ENCODE measurements at regions of chr1 and their contacts with region 1.

Region 1: GRCh38 chr1:34984793-34985608 is at the start of gene TMEM35B:
- DNase-seq: peak; percentile 82
- ATAC-seq: peak; percentile 91
- H3K4me3 ChIP-seq: peak within 1 kb of the TSS; percentile 51 to 83 (median 63)
- H3K4me3 Mint-ChIP-seq: peak within 1 kb of the TSS; percentile 95
- H3K27ac ChIP-seq: peak within 1 kb of the TSS; percentile 63 to 81
- H3K27ac Mint-ChIP-seq: peak within 1 kb of the TSS; percentile 94
- H3K4me1 ChIP-seq: peaks cover 29 to 41% of the 10 kb centered on the region in 2 donors
- H3K4me1 Mint-ChIP-seq: peaks cover 41% of the 10 kb centered on the region
- H3K27me3 ChIP-seq: no peaks in the 10 kb centered on the region
- H3K27me3 Mint-ChIP-seq: no peaks in the 10 kb centered on the region
- CTCF ChIP-seq: peak; percentile 28
- total RNA-seq, gene TMEM35B: 15.9 and 19.6 TPM in 2 replicates

Region 2: DNA sequence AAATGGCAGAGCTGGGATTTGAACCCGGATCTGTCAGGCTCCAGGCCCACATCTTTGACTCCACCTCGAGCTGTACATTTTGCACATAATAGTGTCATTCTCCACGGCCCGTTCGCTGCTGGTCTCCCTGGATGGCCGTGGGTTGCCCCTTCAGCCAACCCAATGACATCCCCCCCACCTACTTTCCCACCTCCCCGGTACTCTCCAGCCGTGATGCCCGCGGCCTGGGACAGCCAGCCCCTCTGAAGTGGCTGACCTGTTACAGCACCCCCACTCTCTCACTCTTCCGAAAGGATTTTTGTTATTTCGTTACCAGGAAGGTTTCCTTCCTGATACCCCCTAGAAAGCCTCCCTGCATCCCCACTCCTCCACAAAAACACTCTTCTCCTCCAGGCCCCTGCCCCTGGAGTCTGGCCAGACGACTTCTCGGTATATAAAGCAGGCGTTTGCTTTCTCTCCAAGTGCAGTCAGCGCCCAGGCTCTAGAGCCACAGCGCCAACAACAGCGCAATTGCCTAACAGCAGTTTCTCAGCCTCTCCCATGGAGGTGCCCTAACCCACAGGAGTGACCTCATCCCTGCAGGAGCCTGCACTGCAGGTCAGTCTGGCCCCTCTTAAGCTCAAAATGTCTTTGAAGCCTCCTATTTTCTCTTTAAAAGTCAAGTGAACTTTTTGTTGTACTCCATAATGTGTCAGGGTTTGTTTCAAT is 244.7 kb before region 1 on chr1:
- CTCF ChIA-PET with region 1: no interaction called
- POLR2A ChIA-PET with region 1: no interaction called
- intact Hi-C with region 1: no loop called
- DNase-seq: no peak
- ATAC-seq: no peak
- H3K4me3 ChIP-seq: no peak overlapping the region
- H3K4me3 Mint-ChIP-seq: no peak overlapping the region
- H3K27ac ChIP-seq: no peak overlapping the region
- H3K27ac Mint-ChIP-seq: no peak overlapping the region
- H3K4me1 ChIP-seq: peaks cover 0 to 5% of the 10 kb centered on the region in 2 donors
- H3K4me1 Mint-ChIP-seq: peaks cover 4% of the 10 kb centered on the region
- H3K27me3 ChIP-seq: peaks cover 0 to 4% (median 0%) of the 10 kb centered on the region in 4 experiments
- H3K27me3 Mint-ChIP-seq: peaks cover 19% of the 10 kb centered on the region
- CTCF ChIP-seq: no peak

Region 3: DNA sequence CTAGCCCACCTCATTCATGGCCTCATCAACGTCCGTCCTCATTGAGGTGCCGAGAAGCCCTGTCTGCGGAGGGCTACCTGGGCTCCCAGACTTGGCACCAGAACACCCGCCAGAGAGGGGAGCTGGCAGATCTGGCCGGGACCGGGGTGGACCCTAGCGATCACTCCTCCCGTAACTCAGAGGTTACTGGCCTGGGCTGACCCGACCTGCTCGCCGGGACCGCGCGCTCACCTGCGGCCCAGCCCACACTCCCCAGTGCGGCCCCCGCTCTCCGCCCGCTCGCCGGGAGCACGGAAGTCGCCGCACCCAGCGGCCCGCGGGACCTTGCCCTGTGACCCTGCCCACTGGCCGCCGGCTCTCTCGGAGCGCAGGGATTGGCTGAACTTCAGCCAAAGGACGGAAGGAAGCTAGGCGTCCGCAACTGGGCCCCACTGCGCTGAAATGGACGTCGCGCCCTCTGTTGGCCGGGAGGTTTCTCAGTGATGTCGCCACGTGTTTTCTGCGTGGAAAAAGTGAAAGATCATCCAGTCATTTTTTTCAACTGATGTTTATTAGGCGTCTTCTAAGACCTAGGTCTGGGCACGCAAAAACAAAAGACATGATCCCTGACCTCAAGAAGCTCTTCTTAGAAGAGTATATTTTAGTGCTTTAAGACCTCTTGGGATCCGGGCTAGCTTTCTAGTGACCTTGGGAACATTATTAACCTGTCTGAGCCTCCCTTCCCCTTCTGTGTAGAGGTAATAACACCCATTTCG is 125.4 kb before region 1 on chr1 and contains the start of gene SMIM12:
- CTCF ChIA-PET with region 1: interaction called, 16 read pairs
- POLR2A ChIA-PET with region 1: interaction called, 3 read pairs
- intact Hi-C with region 1: no loop called
- DNase-seq: peak; percentile 91
- ATAC-seq: peak; percentile 99
- H3K4me3 ChIP-seq: peak within 1 kb of the TSS; percentile 60 to 90 (median 82)
- H3K4me3 Mint-ChIP-seq: peak within 1 kb of the TSS; percentile 95
- H3K27ac ChIP-seq: peak within 1 kb of the TSS; percentile 55 to 81
- H3K27ac Mint-ChIP-seq: peak within 1 kb of the TSS; percentile 93
- H3K4me1 ChIP-seq: peaks cover 20 to 29% of the 10 kb centered on the region in 2 donors
- H3K4me1 Mint-ChIP-seq: peaks cover 47% of the 10 kb centered on the region
- H3K27me3 ChIP-seq: no peaks in the 10 kb centered on the region
- H3K27me3 Mint-ChIP-seq: no peaks in the 10 kb centered on the region
- CTCF ChIP-seq: peak; percentile 91
- total RNA-seq, gene SMIM12: 33.1 and 39.8 TPM in 2 replicates

Region 4: GRCh38 chr1:35079003-35079930 is 94.3 kb after region 1 on chr1 and contains the start of gene ZMYM1:
- CTCF ChIA-PET with region 1: interaction called, 3 read pairs
- POLR2A ChIA-PET with region 1: no interaction called
- intact Hi-C with region 1: loop called (anchors 1 kb)
- DNase-seq: peak; percentile 90
- ATAC-seq: peak; percentile 92
- H3K4me3 ChIP-seq: peak within 1 kb of the TSS; percentile 48 to 83 (median 71)
- H3K4me3 Mint-ChIP-seq: peak within 1 kb of the TSS; percentile 99
- H3K27ac ChIP-seq: peak within 1 kb of the TSS; percentile 86 to 95
- H3K27ac Mint-ChIP-seq: peak within 1 kb of the TSS; percentile 100
- H3K4me1 ChIP-seq: peaks cover 7 to 17% of the 10 kb centered on the region in 2 donors
- H3K4me1 Mint-ChIP-seq: peaks cover 20% of the 10 kb centered on the region
- H3K27me3 ChIP-seq: peaks cover 0 to 5% (median 0%) of the 10 kb centered on the region in 4 experiments
- H3K27me3 Mint-ChIP-seq: peaks cover 14% of the 10 kb centered on the region
- CTCF ChIP-seq: no peak
- total RNA-seq, gene ZMYM1: 17.6 and 18.3 TPM in 2 replicates

Measured in B cell (primary cell).